A673 (cell line): ENCODE measurements at regions of chr9 and their contacts with region 1.

Region 1: GRCh38 chr9:86948074-86948929 is 996 bp upstream of the GAS1 start:
- DNase-seq: peak; percentile 94
- H3K4me3 ChIP-seq: peak overlapping the region; percentile 84
- H3K27ac ChIP-seq: peak overlapping the region; percentile 71
- H3K4me1 ChIP-seq: peaks cover 22% of the 10 kb centered on the region
- H3K27me3 ChIP-seq: no peaks in the 10 kb centered on the region
- CTCF ChIP-seq: peak; percentile 84

Region 2: DNA sequence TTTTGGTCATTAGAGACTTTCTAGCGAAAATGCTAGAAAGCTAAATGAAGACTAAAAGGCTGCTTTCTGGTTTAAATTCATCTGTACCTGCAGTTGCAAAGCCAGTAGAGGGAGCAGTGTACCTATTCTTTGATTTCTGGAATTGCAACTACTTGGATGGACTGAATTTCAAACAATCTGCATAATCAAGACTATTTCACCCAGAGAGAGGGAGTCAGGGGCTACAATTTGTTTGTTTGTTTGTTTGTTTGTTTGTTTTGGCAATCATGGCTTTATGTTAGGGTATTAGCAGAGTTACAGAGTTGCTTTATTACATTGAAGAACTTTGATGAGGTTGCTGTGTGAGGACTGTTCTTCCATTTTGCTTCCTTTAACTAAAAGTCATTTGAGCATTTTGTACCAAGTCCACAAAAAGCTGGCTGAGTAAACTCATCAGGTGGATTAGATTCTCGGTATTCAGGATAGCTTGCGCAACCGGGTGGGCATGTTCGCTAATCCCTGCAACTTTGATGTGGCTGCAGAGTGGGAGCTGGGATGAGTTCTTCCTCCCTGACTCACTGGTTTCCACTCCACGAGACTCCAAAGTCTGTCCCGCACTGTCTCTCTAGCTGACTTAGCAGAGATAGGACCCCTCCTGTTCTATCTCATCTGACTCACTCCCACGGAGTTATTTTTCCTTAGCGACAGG is 514.1 kb before region 1 on chr9:
- CTCF ChIA-PET with region 1: no interaction called
- POLR2A ChIA-PET with region 1: no interaction called
- intact Hi-C with region 1: loop called (anchors 10 kb)
- DNase-seq: peak; percentile 84
- H3K4me3 ChIP-seq: peak overlapping the region; percentile 9
- H3K27ac ChIP-seq: peak overlapping the region; percentile 69
- H3K4me1 ChIP-seq: peaks cover 9% of the 10 kb centered on the region
- H3K27me3 ChIP-seq: no peaks in the 10 kb centered on the region
- CTCF ChIP-seq: peak; percentile 92

Region 3: GRCh38 chr9:86486891-86487837 is 461.1 kb before region 1 on chr9:
- CTCF ChIA-PET with region 1: interaction called, 7 read pairs
- POLR2A ChIA-PET with region 1: no interaction called
- intact Hi-C with region 1: loop called (anchors 2 kb)
- DNase-seq: peak; percentile 90
- H3K4me3 ChIP-seq: no peak overlapping the region
- H3K27ac ChIP-seq: peak overlapping the region; percentile 72
- H3K4me1 ChIP-seq: peaks cover 38% of the 10 kb centered on the region
- H3K27me3 ChIP-seq: no peaks in the 10 kb centered on the region
- CTCF ChIP-seq: peak; percentile 74

Region 4: GRCh38 chr9:86783884-86784283 is 164.4 kb before region 1 on chr9:
- CTCF ChIA-PET with region 1: no interaction called
- POLR2A ChIA-PET with region 1: no interaction called
- intact Hi-C with region 1: no loop called
- DNase-seq: peak; percentile 69
- H3K4me3 ChIP-seq: no peak overlapping the region
- H3K27ac ChIP-seq: no peak overlapping the region
- H3K4me1 ChIP-seq: no peaks in the 10 kb centered on the region
- H3K27me3 ChIP-seq: no peaks in the 10 kb centered on the region
- CTCF ChIP-seq: no peak

Region 5: DNA sequence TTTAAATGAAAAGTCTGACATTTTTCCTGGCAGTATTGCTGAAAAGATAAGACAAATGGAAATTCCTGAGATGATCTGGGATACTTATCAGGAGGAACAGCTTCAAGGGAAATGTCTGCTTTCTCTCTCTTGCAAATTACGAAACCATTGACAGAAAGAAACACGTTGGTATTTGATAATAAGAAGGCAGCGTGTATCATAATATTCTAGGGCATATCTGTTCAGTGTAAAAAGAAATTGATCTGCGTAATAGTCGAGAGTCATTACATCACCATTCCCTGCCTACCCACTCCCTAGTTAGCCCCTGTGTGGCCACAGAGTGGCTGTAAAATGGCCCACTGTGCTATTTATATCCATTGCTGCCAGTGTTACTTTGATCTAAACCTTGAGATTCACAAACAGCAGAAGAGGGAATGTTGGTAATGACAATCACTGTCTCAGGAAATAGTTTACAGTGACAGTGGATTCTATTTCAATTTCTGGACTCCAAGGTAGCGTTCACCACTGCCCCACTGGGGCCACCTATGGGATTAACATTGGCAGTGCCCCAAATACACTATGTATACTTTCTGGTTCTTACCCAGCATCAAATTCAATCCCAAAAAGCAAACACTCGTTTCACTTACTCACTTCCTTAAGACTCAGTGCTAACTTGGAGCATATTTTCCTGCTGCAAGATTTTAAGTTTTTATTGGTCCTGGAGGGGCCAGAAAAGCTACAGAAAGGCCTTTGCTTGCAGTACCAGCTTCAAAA is 132.4 kb after region 1 on chr9:
- CTCF ChIA-PET with region 1: interaction called, 8 read pairs
- POLR2A ChIA-PET with region 1: interaction called, 4 read pairs
- intact Hi-C with region 1: loop called (anchors 10 kb)
- DNase-seq: peak; percentile 49
- H3K4me3 ChIP-seq: no peak overlapping the region
- H3K27ac ChIP-seq: no peak overlapping the region
- H3K4me1 ChIP-seq: no peaks in the 10 kb centered on the region
- H3K27me3 ChIP-seq: no peaks in the 10 kb centered on the region
- CTCF ChIP-seq: peak; percentile 43